Head of caudate nucleus (tissue), 42 donors: ENCODE measurements at regions of chr16 and their contacts with region 1.

Region 1: DNA sequence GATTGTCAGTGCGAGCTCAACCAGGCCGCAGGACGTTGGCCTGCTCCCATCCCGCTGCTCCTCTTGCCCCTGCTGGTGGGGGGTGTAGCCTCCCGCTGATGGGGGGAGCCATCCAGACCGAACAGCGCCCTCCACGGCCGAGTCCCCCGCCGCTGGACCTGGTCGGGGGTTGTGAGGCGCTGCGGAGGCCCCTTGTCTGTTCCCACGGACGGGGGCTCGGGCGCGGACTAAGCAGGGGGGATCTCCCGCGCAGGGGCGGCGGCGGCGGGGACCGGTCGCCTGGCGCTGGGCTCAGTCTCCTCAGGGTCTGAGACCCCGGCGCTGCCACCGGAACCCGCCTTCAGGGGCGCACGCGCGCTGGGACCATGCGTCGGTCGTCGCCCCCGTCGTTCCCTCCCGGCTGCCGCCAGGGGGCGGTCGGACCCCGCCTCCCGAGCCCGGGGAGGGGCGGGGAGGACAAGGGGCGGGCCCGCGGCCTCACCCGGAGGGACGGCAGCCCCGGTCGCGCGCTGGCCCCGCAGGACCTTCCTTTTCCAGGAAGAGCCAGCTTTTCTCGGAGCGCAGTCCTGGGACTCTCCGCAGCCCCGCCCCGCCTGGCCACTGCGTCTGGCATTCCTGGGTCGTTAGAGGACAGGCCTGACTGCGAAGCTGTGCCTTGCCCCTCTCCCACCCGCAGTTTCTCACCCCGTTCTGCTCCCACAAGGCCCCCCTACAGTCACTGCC is 6.3 kb upstream of the IL32 start:
- DNase-seq: peak; percentile 15 to 90 (median 82)

Region 2: GRCh38 chr16:3023669-3024478 is 35.3 kb before region 1 on chr16 and contains the starts of genes HCFC1R1 and THOC6:
- intact Hi-C with region 1: no loop called
- DNase-seq: peak; percentile 96 to 99 (median 98)

Region 3: DNA sequence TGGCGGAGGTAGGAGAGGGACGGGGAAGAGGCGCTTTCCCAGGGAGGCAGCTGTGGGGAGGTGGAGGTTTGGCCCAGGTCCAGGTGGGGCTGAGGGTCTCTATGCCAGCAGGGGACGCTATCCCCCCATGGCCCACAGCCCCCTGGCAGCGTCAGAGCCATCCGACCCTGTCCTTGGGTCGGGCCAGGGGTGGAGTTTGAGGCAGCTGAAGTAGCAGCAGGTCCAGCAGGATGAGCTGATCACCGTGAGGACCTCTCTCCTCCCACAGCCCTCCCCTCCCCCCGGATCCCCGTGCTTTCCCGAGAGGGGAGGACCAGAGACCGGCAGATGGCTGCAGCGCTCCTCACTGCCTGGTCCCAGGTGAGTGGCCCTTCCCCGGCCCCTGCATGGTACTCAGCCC is 56.4 kb after region 1 on chr16:
- intact Hi-C with region 1: loop called (anchors 5 kb)
- DNase-seq: no peak

Region 4: DNA sequence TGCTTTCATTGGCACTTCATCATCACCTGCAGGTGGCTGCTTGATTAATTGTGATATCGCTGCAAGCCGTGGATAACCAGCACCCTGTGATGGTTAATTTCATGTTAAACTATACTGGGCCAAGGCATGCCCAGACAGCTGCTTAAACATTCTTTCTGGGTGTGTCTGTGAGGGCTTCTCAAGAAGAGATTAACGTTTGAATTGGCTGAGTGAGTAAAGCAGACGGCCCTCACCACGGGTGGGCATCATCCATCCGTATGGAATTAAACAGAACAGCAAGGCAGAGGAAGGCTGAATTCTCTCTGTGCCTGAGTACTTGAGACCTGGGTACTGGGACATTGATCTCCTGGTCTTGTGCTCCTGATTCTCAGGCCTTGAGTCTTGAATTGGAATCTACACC is 68.6 kb after region 1 on chr16:
- intact Hi-C with region 1: loop called (anchors 2 kb)
- DNase-seq: no peak